Gastrocnemius medialis (tissue), 4 donors: ENCODE measurements at regions of chr4 and their contacts with region 1.

Region 1: GRCh38 chr4:128039568-128039967 is 21.5 kb upstream of the LARP1B start:
- DNase-seq: no peak
- ATAC-seq: no peak
- H3K4me3 ChIP-seq: no peak overlapping the region
- H3K27ac ChIP-seq: no peak overlapping the region
- H3K4me1 ChIP-seq: no peaks in the 10 kb centered on the region
- H3K27me3 ChIP-seq: no peaks in the 10 kb centered on the region
- CTCF ChIP-seq: no peak
- POLR2A ChIP-seq: no peak

Region 2: DNA sequence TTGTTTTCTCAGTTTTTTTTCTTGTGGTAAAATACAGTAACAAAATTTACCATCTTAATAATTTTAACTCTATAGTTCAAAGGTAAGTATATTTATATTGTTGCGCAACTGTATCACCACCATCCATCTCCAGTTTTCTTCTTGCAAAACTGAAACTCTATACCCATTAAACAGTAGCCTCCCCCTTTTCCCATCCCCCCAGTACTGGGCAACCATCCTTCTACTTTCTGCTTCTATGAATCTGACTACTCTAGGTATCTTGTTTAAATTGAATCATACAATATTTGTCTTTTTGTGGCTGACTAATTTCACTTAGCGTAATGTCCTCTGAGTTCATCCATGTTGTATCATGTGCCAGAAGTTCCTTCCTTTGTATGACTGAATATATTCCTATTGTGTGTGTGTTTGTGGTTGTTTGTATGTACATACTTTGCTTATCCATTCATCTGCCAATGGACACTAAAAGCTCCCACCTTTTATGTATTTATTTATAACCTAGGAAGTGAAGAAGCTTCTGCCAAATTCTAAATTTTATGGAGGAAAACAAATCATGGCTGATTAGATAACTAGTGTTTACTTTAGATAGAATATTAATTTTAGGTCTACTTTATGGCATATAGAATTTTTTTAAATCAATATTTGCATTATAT is 64.3 kb before region 1 on chr4:
- in situ Hi-C with region 1: loop called in 1 of 4 experiments (anchors 10 kb)
- intact Hi-C with region 1: no loop called
- DNase-seq: no peak
- ATAC-seq: peak in 1 of 2 donors; percentile 64
- H3K4me3 ChIP-seq: no peak overlapping the region
- H3K27ac ChIP-seq: no peak overlapping the region
- H3K4me1 ChIP-seq: peaks cover 5 to 9% of the 10 kb centered on the region in 2 donors
- H3K27me3 ChIP-seq: no peaks in the 10 kb centered on the region
- CTCF ChIP-seq: no peak
- POLR2A ChIP-seq: no peak